OCI-LY7 (cell line): ENCODE measurements at regions of chr9 and their contacts with region 1.

Region 1: GRCh38 chr9:6703898-6704639 is 53.7 kb upstream of the KDM4C start:
- DNase-seq: peak; percentile 91
- H3K4me3 ChIP-seq: peak overlapping the region; percentile 83
- H3K27ac ChIP-seq: peak overlapping the region; percentile 51
- H3K4me1 ChIP-seq: peaks cover 14% of the 10 kb centered on the region
- CTCF ChIP-seq: no peak

Region 2: DNA sequence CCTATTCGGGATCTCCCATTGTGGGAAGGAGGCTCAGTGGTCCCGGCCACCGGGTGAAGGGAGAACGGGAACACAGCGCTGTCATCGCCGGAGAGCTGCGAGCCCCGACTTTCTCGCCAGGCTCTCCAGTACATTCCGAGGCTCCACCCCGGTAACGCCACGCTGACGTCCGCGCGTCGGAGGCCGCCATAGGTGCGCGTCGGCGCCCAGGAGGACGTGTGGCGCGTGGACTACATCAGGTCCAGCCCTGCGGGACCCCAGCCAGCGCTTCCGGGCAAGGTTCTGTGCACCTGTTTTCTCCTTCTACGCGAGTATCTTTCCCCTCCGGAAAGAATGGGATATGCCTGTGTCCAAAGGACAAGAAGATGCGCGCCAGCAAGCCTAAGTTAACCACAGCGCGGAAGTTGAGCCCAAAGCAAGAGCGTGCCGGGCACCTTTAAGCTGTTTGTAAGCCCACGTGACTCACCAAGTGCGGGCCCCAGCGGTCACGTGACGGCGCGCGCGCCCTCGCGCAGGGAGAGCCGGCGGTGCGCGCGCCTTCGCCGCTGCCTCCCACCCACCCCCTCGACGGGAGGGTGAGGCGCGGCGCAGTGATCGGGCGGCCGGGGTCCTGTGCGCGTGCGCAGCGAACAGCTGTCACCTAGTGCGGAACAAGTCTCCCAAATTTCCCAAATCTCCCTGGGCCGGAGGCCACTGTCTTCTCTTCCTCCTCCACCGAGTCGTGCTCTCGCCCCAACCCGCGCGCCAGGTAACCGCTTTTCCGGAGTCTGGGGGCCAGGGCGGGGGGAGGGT is 53.6 kb after region 1 on chr9 and contains the start of gene KDM4C:
- CTCF ChIA-PET with region 1: no interaction called
- POLR2A ChIA-PET with region 1: interaction called, 21 read pairs
- intact Hi-C with region 1: loop called (anchors 5 kb)
- DNase-seq: peak; percentile 97
- H3K4me3 ChIP-seq: peak within 1 kb of the TSS; percentile 94
- H3K27ac ChIP-seq: peak within 1 kb of the TSS; percentile 80
- H3K4me1 ChIP-seq: peaks cover 22% of the 10 kb centered on the region
- CTCF ChIP-seq: no peak
- total RNA-seq, gene KDM4C: 51.5 and 57.9 TPM in 2 replicates